BJ (cell line): ENCODE measurements at regions of chr7 and their contacts with region 1.

Region 1: DNA sequence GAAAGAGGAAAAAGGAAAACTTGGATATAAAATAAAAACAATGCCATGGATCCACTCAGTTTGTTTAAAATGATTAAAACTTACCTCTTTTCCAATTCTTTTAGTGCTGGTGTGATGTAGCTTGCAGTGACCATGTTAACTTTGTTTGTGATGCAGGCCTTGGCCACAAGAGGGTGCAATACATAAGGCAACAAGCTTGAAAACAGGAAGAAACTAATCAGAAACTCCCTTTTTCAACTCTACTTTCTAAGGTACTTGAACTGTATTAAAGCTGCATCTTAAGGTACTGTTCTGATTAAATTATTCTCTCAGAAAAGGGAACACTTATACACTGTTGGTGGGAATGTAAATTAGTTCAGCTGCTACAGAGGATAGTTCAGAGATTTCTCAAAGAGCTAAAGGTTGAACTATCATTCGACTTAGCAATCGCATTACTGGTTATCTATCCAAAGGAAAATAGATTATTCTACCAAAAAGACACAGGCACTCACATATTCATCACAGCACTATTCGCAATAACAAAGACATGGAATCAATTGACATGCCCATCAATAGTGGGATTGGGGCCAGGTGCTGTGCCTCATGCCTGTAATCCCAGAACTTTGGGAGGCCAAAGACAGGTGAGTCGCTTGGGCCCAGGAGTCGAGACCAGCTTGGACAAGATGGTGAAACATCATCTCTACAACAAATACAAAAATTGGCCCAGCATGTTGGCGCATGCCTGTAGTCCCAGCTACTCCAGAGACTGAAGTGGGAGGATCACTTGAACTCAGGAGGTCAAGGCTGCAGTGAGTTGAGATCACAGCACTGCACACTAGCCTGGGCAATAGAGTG is 50.9 kb downstream of the AASS start:
- DNase-seq: peak; percentile 31
- H3K4me3 ChIP-seq: no peak overlapping the region
- H3K27me3 ChIP-seq: no peaks in the 10 kb centered on the region
- CTCF ChIP-seq: peak; percentile 93

Region 2: GRCh38 chr7:122082670-122083069 is 10.5 kb before region 1 on chr7:
- CTCF ChIA-PET with region 1: interaction called, 15 read pairs
- POLR2A ChIA-PET with region 1: no interaction called
- DNase-seq: no peak
- H3K4me3 ChIP-seq: no peak overlapping the region
- H3K27me3 ChIP-seq: no peaks in the 10 kb centered on the region
- CTCF ChIP-seq: no peak

Region 3: GRCh38 chr7:122532406-122533269 is 439.5 kb after region 1 on chr7:
- CTCF ChIA-PET with region 1: interaction called, 12 read pairs
- POLR2A ChIA-PET with region 1: no interaction called
- DNase-seq: no peak
- H3K4me3 ChIP-seq: no peak overlapping the region
- H3K27me3 ChIP-seq: no peaks in the 10 kb centered on the region
- CTCF ChIP-seq: peak; percentile 37